Activated T-helper 1 cell treated with anti-CD3 and anti-CD28 coated beads, Interleukin-12 subunit alpha, Interleukin-12 subunit beta, Interleukin-2, Interleukin-4 antibody, amounts not matched to agents 30 ng/mL and 10 ng/mL and 1 ng/mL, durations not matched to agents 14 hours and 24 hours and 36 hours (primary cell): ENCODE measurements at regions of chr7 and their contacts with region 1.

Region 1: GRCh38 chr7:4753711-4754432 is 21.6 kb upstream of the AP5Z1 start:
- DNase-seq: peak; percentile 73
- H3K4me3 Mint-ChIP-seq: no peak overlapping the region
- H3K27ac Mint-ChIP-seq: no peak overlapping the region
- H3K4me1 Mint-ChIP-seq: peaks cover 8% of the 10 kb centered on the region
- H3K27me3 Mint-ChIP-seq: no peaks in the 10 kb centered on the region

Region 2: DNA sequence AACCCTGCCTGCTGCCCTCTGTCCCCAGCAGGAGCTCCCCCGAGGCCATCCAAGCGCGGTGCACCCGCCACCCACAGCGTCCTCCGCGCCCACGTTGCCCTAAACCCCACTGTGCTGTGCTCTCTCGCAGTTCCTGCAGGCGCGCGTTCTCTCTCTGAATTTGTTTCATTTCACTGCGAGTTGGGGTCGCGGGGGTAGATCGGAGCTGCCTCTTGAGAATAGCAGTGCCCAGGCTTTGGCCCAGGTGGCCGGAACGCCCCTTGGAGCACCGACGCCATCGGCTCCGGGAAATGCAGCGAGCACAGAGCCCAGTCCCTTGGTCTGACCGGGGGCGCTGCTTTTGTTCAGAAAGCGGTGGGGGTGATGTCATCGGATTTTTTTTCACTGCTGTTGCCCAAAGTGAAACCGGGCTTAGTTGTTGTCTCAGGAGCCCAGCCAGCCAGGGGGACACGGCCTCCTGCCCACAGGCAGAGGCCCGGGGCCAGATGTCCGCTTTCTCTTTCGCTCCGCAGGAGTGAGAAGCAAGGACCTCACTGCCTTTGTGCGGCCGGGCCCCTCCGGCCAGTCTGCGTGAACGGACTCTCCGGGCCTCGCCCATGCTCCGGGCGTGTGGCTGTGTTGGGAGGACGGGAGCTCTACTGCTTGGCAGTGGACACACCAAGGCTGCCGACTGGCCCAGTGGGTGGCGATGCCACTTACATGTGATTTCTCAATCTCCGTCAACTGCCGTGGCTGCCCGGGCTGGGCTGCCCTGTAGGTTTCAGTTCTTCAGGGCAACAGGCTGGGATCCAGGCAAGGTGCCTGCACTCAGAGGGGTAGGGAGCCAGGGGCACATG is 28.6 kb before region 1 on chr7:
- intact Hi-C with region 1: loop called (anchors 1 kb)
- DNase-seq: peak; percentile 64
- H3K4me3 Mint-ChIP-seq: peak overlapping the region; percentile 87
- H3K27ac Mint-ChIP-seq: peak overlapping the region; percentile 90
- H3K4me1 Mint-ChIP-seq: peaks cover 24% of the 10 kb centered on the region
- H3K27me3 Mint-ChIP-seq: no peaks in the 10 kb centered on the region

Region 3: GRCh38 chr7:4783762-4784351 is 30.0 kb after region 1 on chr7:
- intact Hi-C with region 1: no loop called
- DNase-seq: no peak
- H3K4me3 Mint-ChIP-seq: no peak overlapping the region
- H3K27ac Mint-ChIP-seq: no peak overlapping the region
- H3K4me1 Mint-ChIP-seq: no peaks in the 10 kb centered on the region
- H3K27me3 Mint-ChIP-seq: no peaks in the 10 kb centered on the region